ENCODE measurements at regions of chr7 and their contacts with region 1.

Region 1: GRCh38 chr7:116180302-116180701 is 30.0 kb upstream of the TES start:
- DNase-seq: peak; percentile 70
- H3K4me3 ChIP-seq: no peak overlapping the region
- H3K27ac ChIP-seq: no peak overlapping the region
- H3K4me1 ChIP-seq: no peaks in the 10 kb centered on the region
- H3K27me3 ChIP-seq: no peaks in the 10 kb centered on the region
- CTCF ChIP-seq: peak; percentile 53 to 63
- POLR2A ChIP-seq: no peak

Region 2: DNA sequence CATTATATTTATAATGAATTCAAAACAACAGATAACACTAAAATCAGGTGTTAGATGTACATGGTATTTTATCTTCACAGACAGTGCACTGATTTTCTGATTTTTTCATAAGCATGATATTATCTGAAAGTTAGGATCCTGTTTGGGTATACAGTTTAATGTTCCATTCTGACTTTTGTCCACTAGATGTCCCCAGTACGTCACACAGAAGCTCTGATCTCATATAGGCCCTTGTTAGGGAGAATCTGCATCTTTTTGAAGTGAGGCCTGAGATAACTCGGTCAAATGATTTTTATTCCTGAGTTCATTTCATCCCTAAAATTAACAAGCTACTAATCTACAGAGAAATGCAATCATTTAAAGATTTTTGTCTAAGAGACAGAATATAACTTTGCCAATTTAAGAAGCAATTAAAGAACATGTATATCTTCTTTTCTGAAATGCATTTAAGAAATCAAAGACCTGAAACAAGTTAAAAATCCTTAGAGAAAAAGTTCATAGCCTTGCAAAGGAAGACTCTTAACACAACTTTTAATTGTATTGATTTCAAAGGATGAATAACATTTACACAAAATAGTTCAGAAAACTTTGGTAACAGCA is 42.0 kb before region 1 on chr7:
- CTCF ChIA-PET with region 1: interaction called, 10 read pairs
- POLR2A ChIA-PET with region 1: no interaction called
- dilution Hi-C with region 1: no loop called
- intact Hi-C with region 1: no loop called
- DNase-seq: peak; percentile 81
- H3K4me3 ChIP-seq: no peak overlapping the region
- H3K27ac ChIP-seq: no peak overlapping the region
- H3K4me1 ChIP-seq: peaks cover 6% of the 10 kb centered on the region
- H3K27me3 ChIP-seq: no peaks in the 10 kb centered on the region
- CTCF ChIP-seq: peak; percentile 45 to 51
- POLR2A ChIP-seq: no peak

Region 3: GRCh38 chr7:116195451-116195850 is 15.1 kb after region 1 on chr7:
- CTCF ChIA-PET with region 1: interaction called, 17 read pairs
- POLR2A ChIA-PET with region 1: no interaction called
- dilution Hi-C with region 1: no loop called
- intact Hi-C with region 1: no loop called
- DNase-seq: peak; percentile 8
- H3K4me3 ChIP-seq: no peak overlapping the region
- H3K27ac ChIP-seq: no peak overlapping the region
- H3K4me1 ChIP-seq: no peaks in the 10 kb centered on the region
- H3K27me3 ChIP-seq: no peaks in the 10 kb centered on the region
- CTCF ChIP-seq: no peak
- POLR2A ChIP-seq: no peak

Region 4: GRCh38 chr7:116211006-116211912 is 31.0 kb after region 1 on chr7:
- CTCF ChIA-PET with region 1: interaction called, 55 read pairs
- POLR2A ChIA-PET with region 1: no interaction called
- dilution Hi-C with region 1: no loop called
- intact Hi-C with region 1: loop called (anchors 2 kb)
- DNase-seq: peak; percentile 86
- H3K4me3 ChIP-seq: peak overlapping the region; percentile 79 to 89 (median 84)
- H3K27ac ChIP-seq: peak overlapping the region; percentile 89
- H3K4me1 ChIP-seq: peaks cover 39% of the 10 kb centered on the region
- H3K27me3 ChIP-seq: no peaks in the 10 kb centered on the region
- CTCF ChIP-seq: no peak
- POLR2A ChIP-seq: peak; percentile 52

Region 5: DNA sequence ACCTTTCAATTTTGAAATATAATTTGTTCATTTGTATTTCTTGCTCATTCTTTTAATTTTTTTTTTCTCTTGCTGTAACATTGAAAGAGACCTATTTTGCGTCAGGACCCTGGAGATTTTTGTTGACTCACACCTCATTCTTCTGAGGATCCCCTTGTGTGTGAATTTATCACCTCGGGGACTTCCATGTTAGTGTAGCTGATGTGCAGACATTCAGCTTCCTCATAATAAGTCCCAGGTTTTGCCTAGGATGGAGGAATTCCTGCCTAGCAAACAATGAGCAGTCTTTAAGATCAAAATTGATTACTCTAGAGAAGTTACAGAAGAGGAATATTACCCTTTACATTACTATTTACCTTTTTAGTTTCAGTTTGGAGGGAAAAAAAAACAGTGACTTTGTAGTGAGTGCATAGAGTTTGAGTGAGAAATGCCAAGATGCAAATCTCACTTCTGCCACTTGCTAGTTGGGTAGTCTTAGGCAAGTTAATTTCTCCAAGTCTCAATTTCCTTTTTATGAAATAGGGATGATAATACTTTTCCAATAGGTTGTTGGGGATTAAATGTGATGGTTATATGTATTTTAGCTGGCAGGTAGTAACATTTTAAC is 44.3 kb after region 1 on chr7:
- CTCF ChIA-PET with region 1: interaction called, 462 read pairs
- POLR2A ChIA-PET with region 1: interaction called, 3 read pairs
- dilution Hi-C with region 1: no loop called
- intact Hi-C with region 1: no loop called
- DNase-seq: no peak
- H3K4me3 ChIP-seq: no peak overlapping the region
- H3K27ac ChIP-seq: no peak overlapping the region
- H3K4me1 ChIP-seq: peaks cover 4% of the 10 kb centered on the region
- H3K27me3 ChIP-seq: no peaks in the 10 kb centered on the region
- CTCF ChIP-seq: no peak
- POLR2A ChIP-seq: no peak

Region 6: GRCh38 chr7:116249708-116250553 is 69.6 kb after region 1 on chr7:
- CTCF ChIA-PET with region 1: interaction called, 34 read pairs
- POLR2A ChIA-PET with region 1: no interaction called
- dilution Hi-C with region 1: no loop called
- intact Hi-C with region 1: no loop called
- DNase-seq: peak; percentile 69
- H3K4me3 ChIP-seq: no peak overlapping the region
- H3K27ac ChIP-seq: no peak overlapping the region
- H3K4me1 ChIP-seq: no peaks in the 10 kb centered on the region
- H3K27me3 ChIP-seq: no peaks in the 10 kb centered on the region
- CTCF ChIP-seq: peak; percentile 47 to 56
- POLR2A ChIP-seq: no peak

Region 7: GRCh38 chr7:116367221-116367813 is 187.0 kb after region 1 on chr7:
- CTCF ChIA-PET with region 1: no interaction called
- POLR2A ChIA-PET with region 1: no interaction called
- dilution Hi-C with region 1: no loop called
- intact Hi-C with region 1: no loop called
- DNase-seq: no peak
- H3K4me3 ChIP-seq: no peak overlapping the region
- H3K27ac ChIP-seq: no peak overlapping the region
- H3K4me1 ChIP-seq: peaks cover 17% of the 10 kb centered on the region
- H3K27me3 ChIP-seq: no peaks in the 10 kb centered on the region
- CTCF ChIP-seq: no peak
- POLR2A ChIP-seq: no peak

Region 8: GRCh38 chr7:116582806-116583444 is 402.6 kb after region 1 on chr7:
- CTCF ChIA-PET with region 1: interaction called, 144 read pairs
- POLR2A ChIA-PET with region 1: no interaction called
- dilution Hi-C with region 1: no loop called
- intact Hi-C with region 1: no loop called
- DNase-seq: peak; percentile 32
- H3K4me3 ChIP-seq: no peak overlapping the region
- H3K27ac ChIP-seq: no peak overlapping the region
- H3K4me1 ChIP-seq: peaks cover 25% of the 10 kb centered on the region
- H3K27me3 ChIP-seq: no peaks in the 10 kb centered on the region
- CTCF ChIP-seq: no peak
- POLR2A ChIP-seq: no peak

Measured in endothelial cell of umbilical vein (primary cell).